ENCODE measurements at regions of chr17 and their contacts with region 1.

Region 1: DNA sequence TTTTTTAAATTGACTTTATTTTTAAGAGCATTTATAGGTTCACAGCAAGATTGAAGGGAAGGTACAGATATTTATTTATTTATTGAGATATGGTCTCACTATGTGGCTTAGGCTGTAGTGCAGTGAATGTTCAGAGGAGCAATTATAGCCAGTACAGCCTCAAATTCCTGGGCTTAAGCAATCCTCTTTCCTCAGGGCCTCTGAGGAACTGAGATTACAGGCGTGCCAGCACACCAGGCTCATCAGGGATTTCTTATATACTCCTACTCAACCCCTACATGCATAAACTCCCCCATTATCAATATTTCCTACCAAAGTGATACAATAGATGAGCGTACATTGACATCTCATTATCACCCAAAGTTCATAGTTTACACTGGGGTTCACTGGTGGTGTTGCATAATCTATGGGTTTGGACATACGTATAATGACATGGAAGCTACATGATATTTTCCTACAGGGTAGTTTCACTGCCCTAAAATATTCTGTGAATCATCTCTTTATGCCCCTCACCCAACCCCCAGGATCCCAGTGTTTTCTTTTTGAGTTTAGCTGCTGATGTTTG is 33.5 kb downstream of the HS3ST3B1 start:
- DNase-seq: no peak
- ATAC-seq: no peak
- H3K4me3 ChIP-seq: no peak overlapping the region
- H3K4me3 Mint-ChIP-seq: peak overlapping the region in 1 of 3 donors; percentile 10
- H3K27ac ChIP-seq: no peak overlapping the region
- H3K27ac Mint-ChIP-seq: peak overlapping the region; percentile 46 to 76
- H3K4me1 ChIP-seq: peaks cover 29 to 61% of the 10 kb centered on the region in 2 experiments
- H3K4me1 Mint-ChIP-seq: peaks cover 90 to 94% (median 94%) of the 10 kb centered on the region in 3 donors
- H3K27me3 ChIP-seq: no peaks in the 10 kb centered on the region
- H3K27me3 Mint-ChIP-seq: no peaks in the 10 kb centered on the region

Region 2: GRCh38 chr17:14061666-14062560 is 272.4 kb before region 1 on chr17:
- CTCF ChIA-PET with region 1: no interaction called
- POLR2A ChIA-PET with region 1: no interaction called
- DNase-seq: no peak
- ATAC-seq: no peak
- H3K4me3 ChIP-seq: no peak overlapping the region
- H3K4me3 Mint-ChIP-seq: no peak overlapping the region
- H3K27ac ChIP-seq: no peak overlapping the region
- H3K27ac Mint-ChIP-seq: no peak overlapping the region
- H3K4me1 ChIP-seq: peaks cover 0 to 3% of the 10 kb centered on the region in 2 experiments
- H3K4me1 Mint-ChIP-seq: peaks cover 0 to 19% (median 14%) of the 10 kb centered on the region in 3 donors
- H3K27me3 ChIP-seq: no peaks in the 10 kb centered on the region
- H3K27me3 Mint-ChIP-seq: no peaks in the 10 kb centered on the region

Region 3: DNA sequence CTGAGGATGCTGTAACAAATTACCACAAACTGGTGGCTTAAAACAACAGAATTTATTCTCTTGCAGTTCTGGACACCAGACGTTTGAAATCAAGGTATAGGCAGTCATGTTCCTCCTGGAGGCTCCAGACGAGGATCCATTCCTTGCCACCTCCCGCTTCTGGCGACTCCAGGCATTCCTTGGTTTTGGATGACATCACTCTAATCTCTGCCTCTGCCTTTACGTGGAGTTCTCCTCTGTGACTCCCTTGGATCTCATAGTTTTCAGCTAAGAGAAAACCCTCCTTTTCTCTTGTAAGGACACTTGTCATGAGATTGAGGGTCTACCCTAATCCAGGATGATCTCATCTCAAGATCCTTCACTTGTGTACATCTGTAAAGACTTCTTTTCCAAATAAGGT is 64.9 kb before region 1 on chr17:
- CTCF ChIA-PET with region 1: no interaction called
- POLR2A ChIA-PET with region 1: no interaction called
- DNase-seq: no peak
- ATAC-seq: no peak
- H3K4me3 ChIP-seq: no peak overlapping the region
- H3K4me3 Mint-ChIP-seq: no peak overlapping the region
- H3K27ac ChIP-seq: no peak overlapping the region
- H3K27ac Mint-ChIP-seq: no peak overlapping the region
- H3K4me1 ChIP-seq: no peaks in the 10 kb centered on the region
- H3K4me1 Mint-ChIP-seq: peaks cover 0 to 7% (median 0%) of the 10 kb centered on the region in 3 donors
- H3K27me3 ChIP-seq: no peaks in the 10 kb centered on the region
- H3K27me3 Mint-ChIP-seq: no peaks in the 10 kb centered on the region

Region 4: GRCh38 chr17:14444915-14445314 is 110.6 kb after region 1 on chr17:
- CTCF ChIA-PET with region 1: no interaction called
- POLR2A ChIA-PET with region 1: interaction called in 1 of 2 experiments, 10 read pairs
- DNase-seq: no peak
- ATAC-seq: no peak
- H3K4me3 ChIP-seq: no peak overlapping the region
- H3K4me3 Mint-ChIP-seq: no peak overlapping the region
- H3K27ac ChIP-seq: no peak overlapping the region
- H3K27ac Mint-ChIP-seq: no peak overlapping the region
- H3K4me1 ChIP-seq: no peaks in the 10 kb centered on the region
- H3K4me1 Mint-ChIP-seq: peaks cover 9 to 16% (median 9%) of the 10 kb centered on the region in 3 donors
- H3K27me3 ChIP-seq: no peaks in the 10 kb centered on the region
- H3K27me3 Mint-ChIP-seq: no peaks in the 10 kb centered on the region